ENCODE measurements at regions of chr16 and their contacts with region 1.

Region 1: DNA sequence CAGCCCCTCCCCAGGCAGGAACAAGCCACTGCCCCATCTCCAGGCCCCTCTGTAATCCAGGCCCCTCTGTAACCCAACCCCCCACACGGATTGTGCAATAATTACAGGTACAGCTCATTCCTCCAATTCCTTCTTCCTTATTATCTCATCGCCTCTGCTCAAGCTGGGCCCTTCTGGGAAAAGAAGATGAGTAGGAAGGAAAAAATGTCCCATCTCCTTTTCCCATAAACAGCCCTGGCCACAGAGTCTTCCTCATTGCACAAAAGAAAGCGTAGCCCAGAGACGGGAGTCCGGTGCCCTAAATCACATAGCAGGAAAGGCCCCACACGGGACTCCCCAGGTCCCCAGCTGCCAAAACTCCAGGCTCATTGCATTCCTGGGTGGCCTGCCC is 3.6 kb upstream of the LITAFD start:
- DNase-seq: no peak
- H3K4me3 ChIP-seq: no peak overlapping the region
- H3K4me3 Mint-ChIP-seq: no peak overlapping the region
- H3K27ac ChIP-seq: no peak overlapping the region
- H3K27ac Mint-ChIP-seq: no peak overlapping the region
- H3K4me1 ChIP-seq: peaks cover 3% of the 10 kb centered on the region
- H3K4me1 Mint-ChIP-seq: peaks cover 3 to 20% (median 10%) of the 10 kb centered on the region in 4 donors
- H3K27me3 ChIP-seq: no peaks in the 10 kb centered on the region
- H3K27me3 Mint-ChIP-seq: no peaks in the 10 kb centered on the region

Region 2: DNA sequence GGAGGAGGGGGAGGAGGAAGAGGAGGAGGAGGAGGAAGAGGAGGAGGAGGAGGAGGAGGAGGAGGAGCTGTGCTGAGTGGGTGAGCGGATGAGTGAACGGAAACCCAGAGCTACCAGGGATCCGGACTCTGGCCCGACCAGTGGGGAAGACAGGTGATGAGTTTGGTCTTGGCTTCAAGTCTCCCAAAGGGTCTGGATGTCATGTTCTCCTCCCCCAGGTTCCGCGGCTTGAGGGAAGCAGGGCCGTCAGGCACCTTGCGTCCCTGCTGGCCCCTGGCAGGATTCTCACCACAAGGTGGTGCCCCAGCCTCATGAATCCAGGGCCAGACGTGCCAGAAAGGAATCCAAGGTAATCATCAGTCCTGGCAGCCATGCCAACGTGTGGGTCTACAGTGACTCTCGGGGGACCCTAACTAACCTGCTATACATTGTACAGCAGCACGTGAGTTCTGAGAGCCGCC is 217.6 kb before region 1 on chr16:
- CTCF ChIA-PET with region 1: interaction called, 37 read pairs
- POLR2A ChIA-PET with region 1: no interaction called
- intact Hi-C with region 1: loop called (anchors 1 kb)
- DNase-seq: peak in 4 of 5 donors; percentile 17 to 43 (median 28)
- H3K4me3 ChIP-seq: no peak overlapping the region
- H3K4me3 Mint-ChIP-seq: no peak overlapping the region
- H3K27ac ChIP-seq: no peak overlapping the region
- H3K27ac Mint-ChIP-seq: no peak overlapping the region
- H3K4me1 ChIP-seq: no peaks in the 10 kb centered on the region
- H3K4me1 Mint-ChIP-seq: peaks cover 0 to 1% (median 0%) of the 10 kb centered on the region in 4 donors
- H3K27me3 ChIP-seq: no peaks in the 10 kb centered on the region
- H3K27me3 Mint-ChIP-seq: no peaks in the 10 kb centered on the region

Region 3: DNA sequence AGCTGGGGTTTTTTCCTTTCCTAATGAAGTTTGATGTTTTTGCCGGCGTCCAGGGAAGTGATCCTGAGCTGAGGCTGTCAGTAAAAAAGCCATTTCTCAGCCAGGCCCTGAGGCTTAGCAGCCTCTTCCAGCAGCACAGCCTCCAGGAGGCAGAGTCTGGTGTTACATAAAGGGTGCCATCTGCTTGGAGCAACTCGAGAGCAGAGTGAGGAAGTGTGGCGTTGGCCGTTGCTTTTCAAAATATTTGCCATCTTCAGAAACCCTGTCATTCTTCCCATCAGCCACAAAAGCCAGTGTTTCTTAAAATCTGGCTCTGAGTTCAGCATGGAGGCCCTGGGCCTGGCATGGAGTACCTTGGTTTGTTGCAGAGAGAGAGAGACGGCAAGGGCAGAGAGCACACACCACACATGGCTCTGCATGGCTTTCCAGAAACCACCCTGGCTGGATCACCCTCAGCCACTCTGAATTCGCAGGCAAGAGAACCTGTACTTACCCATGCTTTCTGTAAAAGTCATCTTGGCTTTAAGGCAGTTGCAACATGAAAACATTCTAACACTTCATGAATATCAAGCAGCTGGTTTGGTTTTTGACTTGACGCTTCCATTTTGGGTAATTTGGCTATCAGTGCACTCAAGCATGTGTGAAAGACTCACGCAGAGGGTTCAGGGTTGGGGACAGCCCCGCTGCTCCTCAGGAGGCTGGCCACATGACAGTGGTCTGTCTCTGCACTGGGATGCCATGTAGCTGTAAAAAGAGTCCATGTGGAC is 59.8 kb before region 1 on chr16:
- CTCF ChIA-PET with region 1: interaction called, 14 read pairs
- POLR2A ChIA-PET with region 1: no interaction called
- intact Hi-C with region 1: no loop called
- DNase-seq: no peak
- H3K4me3 ChIP-seq: no peak overlapping the region
- H3K4me3 Mint-ChIP-seq: no peak overlapping the region
- H3K27ac ChIP-seq: no peak overlapping the region
- H3K27ac Mint-ChIP-seq: peak overlapping the region in 1 of 7 donors; percentile 80
- H3K4me1 ChIP-seq: peaks cover 13% of the 10 kb centered on the region
- H3K4me1 Mint-ChIP-seq: peaks cover 11 to 38% (median 28%) of the 10 kb centered on the region in 4 donors
- H3K27me3 ChIP-seq: no peaks in the 10 kb centered on the region
- H3K27me3 Mint-ChIP-seq: no peaks in the 10 kb centered on the region

Region 4: DNA sequence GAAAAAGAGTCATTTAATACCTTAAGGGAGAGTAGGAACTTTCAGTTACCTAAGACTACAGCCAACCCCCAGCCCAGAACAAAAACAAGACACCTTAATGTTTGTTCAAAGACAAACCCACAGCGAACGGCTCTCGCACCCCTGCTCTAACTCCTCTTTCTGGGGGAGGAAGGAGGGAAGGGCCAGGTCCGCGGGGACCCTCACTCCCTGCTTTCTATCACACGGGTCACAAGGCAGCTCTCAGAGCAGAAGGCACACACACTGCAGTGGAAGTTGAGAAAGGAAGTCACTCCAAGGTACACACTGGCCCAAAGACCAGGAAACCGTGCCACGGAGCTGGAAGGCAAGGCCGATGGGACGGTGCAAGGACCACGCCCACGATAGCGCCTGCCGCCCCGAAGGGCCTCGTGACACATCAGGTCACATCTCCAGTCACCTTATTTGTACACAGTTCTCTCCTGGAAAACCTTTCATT is 13.6 kb after region 1 on chr16:
- CTCF ChIA-PET with region 1: interaction called, 23 read pairs
- POLR2A ChIA-PET with region 1: interaction called, 3 read pairs
- intact Hi-C with region 1: no loop called
- DNase-seq: no peak
- H3K4me3 ChIP-seq: no peak overlapping the region
- H3K4me3 Mint-ChIP-seq: peak overlapping the region; percentile 23 to 61 (median 44)
- H3K27ac ChIP-seq: peak overlapping the region; percentile 43
- H3K27ac Mint-ChIP-seq: peak overlapping the region; percentile 79 to 98 (median 94)
- H3K4me1 ChIP-seq: peaks cover 14% of the 10 kb centered on the region
- H3K4me1 Mint-ChIP-seq: peaks cover 9 to 24% (median 14%) of the 10 kb centered on the region in 4 donors
- H3K27me3 ChIP-seq: no peaks in the 10 kb centered on the region
- H3K27me3 Mint-ChIP-seq: no peaks in the 10 kb centered on the region